ENCODE measurements at regions of chr9 and their contacts with region 1.

Region 1: DNA sequence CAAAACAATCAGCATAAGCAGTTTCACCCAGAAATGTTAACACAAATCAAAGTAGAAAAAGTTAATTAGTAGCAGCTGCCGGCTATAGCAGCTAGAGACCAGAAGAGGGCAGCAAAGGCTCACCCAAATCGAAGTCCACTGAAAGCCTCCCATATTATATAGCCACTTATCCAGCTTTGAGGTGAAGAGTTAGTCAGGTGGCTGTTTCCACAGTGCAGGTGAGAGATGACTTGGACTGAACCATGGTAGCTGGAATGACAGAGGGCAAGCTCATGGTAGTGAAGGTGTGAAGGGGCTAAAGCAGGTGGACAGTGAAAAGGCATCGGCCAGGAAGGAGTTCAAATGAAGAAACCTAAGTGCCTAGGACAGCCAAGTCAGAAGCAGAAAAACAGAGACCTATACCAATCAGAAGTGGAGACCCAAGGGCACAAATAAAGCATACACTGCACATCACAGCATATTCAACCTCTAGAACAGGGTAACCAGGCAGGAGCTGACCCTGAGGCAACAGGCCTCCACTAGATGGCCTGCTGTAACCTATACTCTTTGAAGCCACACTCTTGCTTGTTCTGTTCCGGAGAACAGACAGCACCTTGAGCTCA is 7.2 kb upstream of the RNF38 start:
- DNase-seq: peak; percentile 75
- ATAC-seq: peak; percentile 88
- H3K4me3 Mint-ChIP-seq: no peak overlapping the region
- H3K27ac Mint-ChIP-seq: no peak overlapping the region
- H3K4me1 Mint-ChIP-seq: peaks cover 12% of the 10 kb centered on the region
- H3K27me3 Mint-ChIP-seq: no peaks in the 10 kb centered on the region

Region 2: DNA sequence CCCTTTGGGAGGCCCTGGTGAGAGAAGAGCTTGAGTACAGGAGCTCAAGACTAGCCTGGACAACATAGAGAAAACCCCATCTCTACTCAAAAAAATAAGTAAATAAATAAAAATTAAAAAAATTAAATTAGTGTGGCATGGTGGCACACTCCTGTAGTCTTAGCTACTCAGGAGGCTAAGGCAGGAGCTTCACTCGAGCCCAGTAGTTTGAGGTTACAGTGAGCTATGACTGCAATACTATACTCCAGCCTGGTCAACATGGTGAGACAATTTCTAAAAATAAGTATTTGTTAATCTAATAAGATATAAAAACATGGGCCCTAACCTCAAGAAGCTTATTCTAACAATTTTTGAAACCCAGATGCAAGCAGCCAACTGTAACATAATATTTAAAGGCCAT is 14.7 kb before region 1 on chr9:
- CTCF ChIA-PET with region 1: interaction called, 12 read pairs
- POLR2A ChIA-PET with region 1: no interaction called
- DNase-seq: no peak
- ATAC-seq: no peak
- H3K4me3 Mint-ChIP-seq: no peak overlapping the region
- H3K27ac Mint-ChIP-seq: no peak overlapping the region
- H3K4me1 Mint-ChIP-seq: peaks cover 50% of the 10 kb centered on the region
- H3K27me3 Mint-ChIP-seq: no peaks in the 10 kb centered on the region

Region 3: DNA sequence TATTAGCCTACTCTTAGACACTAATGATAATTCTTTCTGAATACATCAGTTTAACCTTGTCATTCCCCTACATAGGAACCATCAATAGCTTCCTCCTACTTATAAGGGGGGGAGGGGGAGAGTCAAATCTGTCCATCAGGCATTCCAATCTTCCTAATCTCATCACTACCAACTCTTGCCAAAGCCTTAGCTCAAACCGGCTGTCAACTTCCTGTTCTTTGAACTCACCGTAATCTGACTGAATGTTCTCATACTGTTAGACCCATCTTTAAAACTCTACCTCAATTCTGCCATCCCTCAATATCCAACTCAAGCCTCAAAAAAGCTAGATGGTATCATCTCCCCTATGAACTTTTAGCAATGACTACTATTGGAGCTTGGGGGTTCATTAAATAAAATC is 34.7 kb after region 1 on chr9:
- CTCF ChIA-PET with region 1: interaction called, 38 read pairs
- POLR2A ChIA-PET with region 1: interaction called, 3 read pairs
- DNase-seq: no peak
- ATAC-seq: peak; percentile 47
- H3K4me3 Mint-ChIP-seq: no peak overlapping the region
- H3K27ac Mint-ChIP-seq: peak overlapping the region; percentile 0
- H3K4me1 Mint-ChIP-seq: peaks cover 38% of the 10 kb centered on the region
- H3K27me3 Mint-ChIP-seq: no peaks in the 10 kb centered on the region

Region 4: GRCh38 chr9:36470643-36471290 is 63.5 kb after region 1 on chr9:
- CTCF ChIA-PET with region 1: interaction called, 10 read pairs
- POLR2A ChIA-PET with region 1: no interaction called
- DNase-seq: peak; percentile 80
- ATAC-seq: peak; percentile 98
- H3K4me3 Mint-ChIP-seq: peak overlapping the region; percentile 79
- H3K27ac Mint-ChIP-seq: peak overlapping the region; percentile 92
- H3K4me1 Mint-ChIP-seq: peaks cover 35% of the 10 kb centered on the region
- H3K27me3 Mint-ChIP-seq: no peaks in the 10 kb centered on the region

Region 5: GRCh38 chr9:36560857-36561221 is 153.6 kb after region 1 on chr9:
- CTCF ChIA-PET with region 1: interaction called, 193 read pairs
- POLR2A ChIA-PET with region 1: no interaction called
- DNase-seq: no peak
- ATAC-seq: no peak
- H3K4me3 Mint-ChIP-seq: no peak overlapping the region
- H3K27ac Mint-ChIP-seq: no peak overlapping the region
- H3K4me1 Mint-ChIP-seq: peaks cover under 1% of the 10 kb centered on the region
- H3K27me3 Mint-ChIP-seq: peaks cover 4% of the 10 kb centered on the region

Region 6: DNA sequence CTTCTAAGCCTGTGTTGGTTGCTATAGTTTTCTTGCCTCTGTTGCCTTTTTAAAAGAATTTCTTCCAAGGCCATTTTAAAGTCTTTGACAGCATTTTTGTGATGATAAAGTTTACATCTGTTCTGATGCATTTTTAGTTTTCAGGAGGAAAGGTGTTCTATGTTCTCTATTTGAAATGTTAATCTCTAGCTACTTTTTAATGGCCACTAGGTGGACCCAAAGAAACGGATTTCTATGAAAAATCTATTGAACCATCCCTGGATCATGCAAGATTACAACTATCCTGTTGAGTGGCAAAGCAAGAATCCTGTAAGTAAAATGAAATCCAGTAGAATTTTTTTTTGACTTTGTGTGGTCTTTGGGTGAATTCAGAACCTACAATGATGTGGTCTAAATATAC is 225.7 kb after region 1 on chr9:
- CTCF ChIA-PET with region 1: interaction called, 10 read pairs
- POLR2A ChIA-PET with region 1: no interaction called
- DNase-seq: no peak
- ATAC-seq: no peak
- H3K4me3 Mint-ChIP-seq: no peak overlapping the region
- H3K27ac Mint-ChIP-seq: no peak overlapping the region
- H3K4me1 Mint-ChIP-seq: no peaks in the 10 kb centered on the region
- H3K27me3 Mint-ChIP-seq: no peaks in the 10 kb centered on the region

Measured in activated CD8-positive, alpha-beta T cell treated with anti-CD3 and anti-CD28 coated beads, Interleukin-2, amount 10 ng/mL, durations not matched to agents 7 days and 5 days (primary cell).